ENCODE measurements at regions of chr11 and their contacts with region 1.

Region 1: GRCh38 chr11:112289588-112290492 is 29.2 kb upstream of the PLET1 start:
- DNase-seq: peak; percentile 86
- H3K4me3 ChIP-seq: peak overlapping the region; percentile 48
- H3K27ac ChIP-seq: peak overlapping the region; percentile 50
- H3K4me1 ChIP-seq: no peaks in the 10 kb centered on the region
- H3K27me3 ChIP-seq: no peaks in the 10 kb centered on the region
- CTCF ChIP-seq: peak; percentile 72

Region 2: DNA sequence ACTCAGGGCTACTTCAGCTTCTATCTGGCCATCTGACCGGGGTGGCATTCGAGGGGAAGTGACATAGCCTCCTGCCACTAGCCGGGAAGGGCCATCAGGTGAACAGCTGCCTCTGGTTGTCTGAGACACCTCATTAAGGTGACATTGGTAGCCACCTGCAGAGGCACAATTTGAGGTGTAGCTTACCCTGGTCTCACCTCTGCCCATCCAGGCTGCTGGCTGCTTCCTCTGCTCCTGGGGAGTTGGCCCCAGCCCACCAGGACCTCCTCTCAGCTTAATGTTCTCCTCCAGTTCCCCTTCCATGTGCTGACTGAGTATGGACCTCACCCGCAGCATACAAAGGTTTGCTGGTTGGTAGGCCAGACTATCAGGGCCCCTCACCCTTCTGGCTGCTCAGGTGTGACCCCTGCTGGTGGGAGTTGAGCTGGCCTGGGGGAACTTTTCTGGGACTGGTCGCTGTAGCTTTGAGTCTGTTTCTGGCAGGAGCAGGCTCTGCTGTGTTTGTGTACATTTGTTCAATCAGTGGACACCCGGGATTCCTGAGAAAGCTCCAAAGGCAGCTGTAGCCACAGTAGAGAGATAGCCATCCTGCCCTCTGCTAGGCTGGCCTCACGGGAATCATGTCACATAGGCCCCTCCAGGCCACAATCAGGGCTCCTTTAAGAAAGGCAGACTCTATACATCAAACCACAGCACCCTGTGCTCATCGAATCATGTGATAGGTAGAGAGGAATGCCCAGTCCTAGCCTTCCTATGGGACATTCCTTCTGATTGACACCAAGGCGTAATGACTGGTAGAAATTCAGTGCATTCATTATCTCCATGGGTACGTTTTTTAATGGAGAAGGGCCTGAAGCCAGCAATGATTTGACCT is 265.9 kb after region 1 on chr11:
- intact Hi-C with region 1: loop called (anchors 2 kb)
- DNase-seq: peak; percentile 59
- H3K4me3 ChIP-seq: no peak overlapping the region
- H3K27ac ChIP-seq: no peak overlapping the region
- H3K4me1 ChIP-seq: no peaks in the 10 kb centered on the region
- H3K27me3 ChIP-seq: no peaks in the 10 kb centered on the region
- CTCF ChIP-seq: peak; percentile 70

Region 3: GRCh38 chr11:112795142-112795815 is 505.4 kb after region 1 on chr11:
- intact Hi-C with region 1: loop called (anchors 10 kb)
- DNase-seq: peak; percentile 34
- H3K4me3 ChIP-seq: no peak overlapping the region
- H3K27ac ChIP-seq: no peak overlapping the region
- H3K4me1 ChIP-seq: no peaks in the 10 kb centered on the region
- H3K27me3 ChIP-seq: no peaks in the 10 kb centered on the region
- CTCF ChIP-seq: peak; percentile 39

Region 4: GRCh38 chr11:112852143-112852866 is 562.5 kb after region 1 on chr11:
- intact Hi-C with region 1: no loop called
- DNase-seq: no peak
- H3K4me3 ChIP-seq: no peak overlapping the region
- H3K27ac ChIP-seq: no peak overlapping the region
- H3K4me1 ChIP-seq: no peaks in the 10 kb centered on the region
- H3K27me3 ChIP-seq: no peaks in the 10 kb centered on the region
- CTCF ChIP-seq: no peak

Region 5: DNA sequence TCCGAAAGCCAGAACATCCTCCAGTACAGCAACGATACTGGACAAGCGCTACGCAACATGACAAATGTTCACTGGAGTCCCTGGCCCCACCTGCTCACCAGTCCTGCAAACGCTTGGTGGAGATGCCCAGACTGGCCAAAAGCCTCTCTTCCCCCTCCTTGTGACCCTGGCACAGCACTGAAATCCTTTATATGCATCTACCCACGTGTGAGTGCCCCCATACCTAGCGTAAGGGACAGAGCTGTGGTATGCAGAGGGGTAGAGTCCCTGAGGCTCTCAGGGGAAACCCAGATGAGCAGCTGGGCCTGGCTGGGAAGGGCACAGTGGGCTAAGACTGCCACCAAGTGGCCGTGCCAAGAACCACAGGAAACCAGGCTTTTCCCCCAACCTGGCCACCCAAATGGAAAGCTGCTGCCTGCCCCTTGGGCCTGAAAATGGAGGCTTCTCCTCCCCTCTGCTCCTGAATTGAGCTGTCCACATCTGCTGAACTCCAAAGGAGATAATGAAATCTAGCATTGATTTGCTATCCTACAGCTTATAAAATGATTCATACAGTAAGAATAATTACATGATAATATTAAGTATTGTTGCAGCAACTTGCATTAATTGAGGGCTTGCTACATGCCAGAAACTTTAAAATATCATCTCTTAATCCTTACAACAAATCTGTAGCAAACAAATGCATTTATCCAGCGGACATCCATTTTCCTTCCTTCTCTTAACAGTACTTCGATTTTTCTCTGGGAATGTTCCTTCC is 999.8 kb after region 1 on chr11:
- intact Hi-C with region 1: loop called (anchors 5 kb)
- DNase-seq: peak; percentile 43
- H3K4me3 ChIP-seq: no peak overlapping the region
- H3K27ac ChIP-seq: no peak overlapping the region
- H3K4me1 ChIP-seq: no peaks in the 10 kb centered on the region
- H3K27me3 ChIP-seq: no peaks in the 10 kb centered on the region
- CTCF ChIP-seq: peak; percentile 83